Gastrocnemius medialis (tissue), 4 donors: ENCODE measurements at regions of chr1 and their contacts with region 1.

Region 1: GRCh38 chr1:229370601-229371021 is 27.8 kb upstream of the CCSAP start:
- DNase-seq: peak; percentile 31 to 81
- ATAC-seq: peak; percentile 67 to 78
- H3K4me3 ChIP-seq: no peak overlapping the region
- H3K27ac ChIP-seq: peak overlapping the region; percentile 8 to 31 (median 21)
- H3K4me1 ChIP-seq: peaks cover 24 to 26% of the 10 kb centered on the region in 2 donors
- H3K27me3 ChIP-seq: no peaks in the 10 kb centered on the region
- CTCF ChIP-seq: peak in 3 of 5 experiments; percentile 15 to 38 (median 19)
- POLR2A ChIP-seq: no peak

Region 2: GRCh38 chr1:229430761-229431283 is 60.2 kb after region 1 on chr1:
- in situ Hi-C with region 1: no loop called
- intact Hi-C with region 1: loop called (anchors 2 kb)
- DNase-seq: peak in 1 of 2 donors; percentile 85
- ATAC-seq: peak; percentile 37 to 39
- H3K4me3 ChIP-seq: peak overlapping the region in 1 of 4 donors; percentile 22
- H3K27ac ChIP-seq: peak overlapping the region; percentile 17 to 93 (median 48)
- H3K4me1 ChIP-seq: peaks cover 37 to 51% of the 10 kb centered on the region in 2 donors
- H3K27me3 ChIP-seq: peaks cover 0 to 16% (median 0%) of the 10 kb centered on the region in 3 donors
- CTCF ChIP-seq: peak in 2 of 5 experiments; percentile 23 to 45
- POLR2A ChIP-seq: no peak

Region 3: GRCh38 chr1:229452956-229453801 is 82.6 kb after region 1 on chr1:
- in situ Hi-C with region 1: no loop called
- intact Hi-C with region 1: loop called (anchors 1 kb)
- DNase-seq: no peak
- ATAC-seq: peak; percentile 66 to 72
- H3K4me3 ChIP-seq: no peak overlapping the region
- H3K27ac ChIP-seq: no peak overlapping the region
- H3K4me1 ChIP-seq: no peaks in the 10 kb centered on the region
- H3K27me3 ChIP-seq: no peaks in the 10 kb centered on the region
- CTCF ChIP-seq: peak; percentile 53 to 70 (median 64)
- POLR2A ChIP-seq: no peak

Region 4: DNA sequence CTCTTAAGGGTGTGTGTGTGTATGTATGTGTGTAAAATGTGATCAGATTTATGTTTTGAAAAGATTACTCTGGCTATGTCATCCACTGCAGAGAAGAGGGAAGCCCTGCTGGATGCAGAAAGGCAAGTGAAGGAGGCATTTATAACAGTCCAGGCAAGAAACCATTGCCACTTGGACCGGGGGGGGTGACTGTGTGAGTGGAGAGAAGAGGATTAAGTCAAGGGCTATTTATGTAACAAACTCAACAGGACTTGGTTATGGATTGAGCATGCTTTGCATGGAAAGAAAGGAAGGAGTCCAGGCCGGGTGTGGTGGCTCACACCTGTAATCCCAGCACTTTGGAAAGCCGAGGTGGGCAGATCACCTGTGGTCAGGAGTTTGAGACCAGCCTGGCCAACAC is 398.4 kb after region 1 on chr1:
- in situ Hi-C with region 1: no loop called
- intact Hi-C with region 1: no loop called
- DNase-seq: no peak
- ATAC-seq: no peak
- H3K4me3 ChIP-seq: no peak overlapping the region
- H3K27ac ChIP-seq: no peak overlapping the region
- H3K4me1 ChIP-seq: no peaks in the 10 kb centered on the region
- H3K27me3 ChIP-seq: no peaks in the 10 kb centered on the region
- CTCF ChIP-seq: no peak
- POLR2A ChIP-seq: no peak